ENCODE measurements at regions of chr1 and their contacts with region 1.

Region 1: DNA sequence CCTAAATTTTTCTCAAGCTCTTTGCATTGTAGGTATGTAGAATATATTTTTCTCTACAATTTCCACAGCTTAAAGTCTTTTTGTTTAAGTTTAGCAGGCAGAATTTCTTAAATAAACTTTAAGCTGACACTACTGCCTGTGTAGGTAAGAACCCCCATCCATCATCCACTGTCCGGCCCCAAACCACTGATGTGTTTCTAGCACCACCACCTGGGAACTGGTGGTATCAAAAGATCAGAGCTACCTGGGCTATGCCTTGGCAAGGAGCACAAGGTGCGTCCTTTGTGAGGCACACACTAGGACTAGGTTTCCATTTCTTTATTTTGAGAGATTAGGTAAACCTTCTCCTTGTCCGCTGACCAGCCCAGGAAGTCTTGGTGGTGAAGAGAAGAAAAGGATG is 10.5 kb upstream of the LELP1 start:
- DNase-seq: peak; percentile 80
- H3K4me3 Mint-ChIP-seq: no peak overlapping the region
- H3K27ac Mint-ChIP-seq: no peak overlapping the region
- H3K4me1 Mint-ChIP-seq: peaks cover 9% of the 10 kb centered on the region
- H3K27me3 Mint-ChIP-seq: peaks cover 51% of the 10 kb centered on the region
- CTCF ChIP-seq: peak; percentile 78

Region 2: GRCh38 chr1:152252157-152252556 is 940.5 kb before region 1 on chr1:
- CTCF ChIA-PET with region 1: no interaction called
- intact Hi-C with region 1: no loop called
- DNase-seq: no peak
- H3K4me3 Mint-ChIP-seq: no peak overlapping the region
- H3K27ac Mint-ChIP-seq: no peak overlapping the region
- H3K4me1 Mint-ChIP-seq: no peaks in the 10 kb centered on the region
- H3K27me3 Mint-ChIP-seq: peaks cover 57% of the 10 kb centered on the region
- CTCF ChIP-seq: no peak

Region 3: GRCh38 chr1:152869808-152870419 is 322.8 kb before region 1 on chr1:
- CTCF ChIA-PET with region 1: interaction called, 76 read pairs
- intact Hi-C with region 1: loop called (anchors 1 kb)
- DNase-seq: peak; percentile 86
- H3K4me3 Mint-ChIP-seq: no peak overlapping the region
- H3K27ac Mint-ChIP-seq: no peak overlapping the region
- H3K4me1 Mint-ChIP-seq: no peaks in the 10 kb centered on the region
- H3K27me3 Mint-ChIP-seq: no peaks in the 10 kb centered on the region
- CTCF ChIP-seq: peak; percentile 90

Region 4: DNA sequence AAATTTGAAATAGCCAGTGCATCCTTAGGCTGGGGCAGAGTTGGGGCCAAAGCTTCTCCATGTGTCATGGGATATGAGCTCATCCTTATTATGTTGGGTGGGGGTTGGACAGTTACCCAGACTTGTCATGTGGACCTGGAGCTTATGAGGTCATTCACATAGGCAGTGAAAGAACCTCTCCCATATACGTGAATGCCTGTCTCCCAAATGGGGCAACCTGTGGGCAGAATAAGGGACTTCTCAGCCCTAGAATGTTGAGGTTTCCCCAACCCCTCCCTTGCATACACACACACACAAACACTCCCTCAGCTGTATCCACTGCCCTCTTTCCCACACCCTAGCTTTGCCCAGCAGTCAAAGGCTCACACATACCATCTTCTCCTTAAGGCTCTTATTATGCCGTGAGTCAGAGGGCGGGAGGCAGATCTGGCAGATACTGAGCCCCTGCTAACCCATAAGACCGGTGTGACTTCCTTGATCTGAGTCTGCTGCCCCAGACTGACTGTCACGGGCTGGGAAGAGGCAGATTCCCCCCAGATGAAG is 286.6 kb before region 1 on chr1:
- CTCF ChIA-PET with region 1: interaction called, 13 read pairs
- intact Hi-C with region 1: no loop called
- DNase-seq: peak; percentile 71
- H3K4me3 Mint-ChIP-seq: no peak overlapping the region
- H3K27ac Mint-ChIP-seq: peak overlapping the region; percentile 34
- H3K4me1 Mint-ChIP-seq: peaks cover 51% of the 10 kb centered on the region
- H3K27me3 Mint-ChIP-seq: peaks cover 21% of the 10 kb centered on the region
- CTCF ChIP-seq: no peak

Region 5: DNA sequence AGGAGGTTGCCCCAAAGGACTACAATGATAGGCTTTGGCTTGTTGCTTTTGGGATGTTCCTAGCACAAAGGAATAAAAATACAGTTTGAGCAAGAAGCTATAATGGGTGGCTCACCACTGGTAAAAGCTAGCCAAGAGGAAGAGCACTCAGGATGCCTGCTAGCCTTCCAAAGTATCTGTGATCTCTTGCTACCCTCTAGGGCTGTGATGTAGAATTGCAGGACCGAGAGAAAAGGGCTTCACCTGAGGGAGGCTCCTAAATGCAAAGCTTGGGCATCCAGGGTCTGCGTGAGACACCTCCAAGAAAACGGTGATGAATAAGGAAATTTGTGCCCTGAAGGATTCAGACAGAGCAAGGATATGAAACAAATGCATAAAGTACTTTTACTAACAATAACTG is 266.6 kb before region 1 on chr1:
- CTCF ChIA-PET with region 1: interaction called, 12 read pairs
- intact Hi-C with region 1: no loop called
- DNase-seq: no peak
- H3K4me3 Mint-ChIP-seq: no peak overlapping the region
- H3K27ac Mint-ChIP-seq: no peak overlapping the region
- H3K4me1 Mint-ChIP-seq: peaks cover 13% of the 10 kb centered on the region
- H3K27me3 Mint-ChIP-seq: no peaks in the 10 kb centered on the region
- CTCF ChIP-seq: peak; percentile 43

Region 6: GRCh38 chr1:152986578-152986977 is 206.1 kb before region 1 on chr1:
- CTCF ChIA-PET with region 1: no interaction called
- intact Hi-C with region 1: no loop called
- DNase-seq: no peak
- H3K4me3 Mint-ChIP-seq: no peak overlapping the region
- H3K27ac Mint-ChIP-seq: no peak overlapping the region
- H3K4me1 Mint-ChIP-seq: peaks cover 17% of the 10 kb centered on the region
- H3K27me3 Mint-ChIP-seq: no peaks in the 10 kb centered on the region
- CTCF ChIP-seq: no peak

Region 7: DNA sequence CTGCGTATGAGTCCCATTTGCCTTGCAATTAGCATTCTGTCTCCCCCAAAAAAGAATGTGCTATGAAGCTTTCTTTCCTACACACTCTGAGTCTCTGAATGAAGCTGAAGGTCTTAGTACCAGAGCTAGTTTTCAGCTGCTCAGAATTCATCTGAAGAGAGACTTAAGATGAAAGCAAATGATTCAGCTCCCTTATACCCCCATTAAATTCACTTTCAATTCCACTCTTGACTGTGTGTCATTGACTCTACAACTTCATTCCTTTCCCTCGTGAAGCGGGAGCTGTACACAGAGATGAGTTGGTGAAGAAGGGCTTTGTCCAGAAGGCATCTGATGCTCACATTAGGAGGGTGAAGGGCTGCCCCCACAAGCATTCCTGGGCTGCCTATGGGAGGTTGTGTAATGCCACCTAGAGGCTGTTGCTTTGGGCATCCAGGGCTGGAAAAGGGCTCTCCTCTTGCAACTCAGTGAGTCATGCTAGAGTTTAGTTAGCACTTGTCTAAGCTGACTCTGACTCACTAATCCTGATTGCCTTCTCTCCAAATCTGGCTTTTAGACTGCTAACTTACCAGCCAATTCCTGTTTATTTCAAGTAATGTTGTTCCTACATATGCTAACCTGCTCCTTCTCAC is 159.9 kb before region 1 on chr1:
- CTCF ChIA-PET with region 1: interaction called, 20 read pairs
- intact Hi-C with region 1: loop called (anchors 1 kb)
- DNase-seq: peak; percentile 80
- H3K4me3 Mint-ChIP-seq: no peak overlapping the region
- H3K27ac Mint-ChIP-seq: peak overlapping the region; percentile 53
- H3K4me1 Mint-ChIP-seq: peaks cover 25% of the 10 kb centered on the region
- H3K27me3 Mint-ChIP-seq: no peaks in the 10 kb centered on the region
- CTCF ChIP-seq: peak; percentile 67

Region 8: DNA sequence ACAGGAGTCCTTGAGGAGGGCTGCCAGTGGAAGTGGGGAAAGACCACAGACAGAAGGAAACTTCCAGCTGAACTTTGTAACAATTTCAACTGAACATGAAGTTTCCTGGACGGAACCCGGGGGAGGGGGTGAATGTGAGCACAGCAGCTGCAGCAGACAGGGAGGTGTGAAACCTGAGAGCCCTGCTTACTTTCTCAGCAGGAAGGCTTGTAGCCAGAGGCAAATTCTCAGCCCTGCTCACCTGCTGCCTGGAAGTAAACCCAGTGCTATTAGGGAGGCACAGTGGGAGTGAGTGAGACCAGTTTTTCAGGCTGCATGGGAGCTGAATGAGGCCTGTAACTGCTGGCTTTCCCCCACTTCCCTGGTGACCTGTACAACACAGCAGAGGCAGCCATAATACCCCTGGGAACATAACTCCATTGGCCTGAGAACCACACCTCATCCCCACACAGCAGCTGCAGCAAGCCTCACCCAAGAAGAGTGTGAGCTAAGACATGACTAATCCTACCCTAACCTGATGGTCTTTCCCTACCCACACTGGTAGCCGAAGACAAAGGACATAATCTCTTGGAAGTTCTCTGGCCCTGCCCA is 69.8 kb before region 1 on chr1:
- CTCF ChIA-PET with region 1: interaction called, 3 read pairs
- intact Hi-C with region 1: loop called (anchors 2 kb)
- DNase-seq: peak; percentile 82
- H3K4me3 Mint-ChIP-seq: peak overlapping the region; percentile 48
- H3K27ac Mint-ChIP-seq: peak overlapping the region; percentile 96
- H3K4me1 Mint-ChIP-seq: peaks cover 23% of the 10 kb centered on the region
- H3K27me3 Mint-ChIP-seq: no peaks in the 10 kb centered on the region
- CTCF ChIP-seq: no peak